Psoas muscle (tissue), 8 donors: ENCODE measurements at regions of chr15 and their contacts with region 1.

Region 1: DNA sequence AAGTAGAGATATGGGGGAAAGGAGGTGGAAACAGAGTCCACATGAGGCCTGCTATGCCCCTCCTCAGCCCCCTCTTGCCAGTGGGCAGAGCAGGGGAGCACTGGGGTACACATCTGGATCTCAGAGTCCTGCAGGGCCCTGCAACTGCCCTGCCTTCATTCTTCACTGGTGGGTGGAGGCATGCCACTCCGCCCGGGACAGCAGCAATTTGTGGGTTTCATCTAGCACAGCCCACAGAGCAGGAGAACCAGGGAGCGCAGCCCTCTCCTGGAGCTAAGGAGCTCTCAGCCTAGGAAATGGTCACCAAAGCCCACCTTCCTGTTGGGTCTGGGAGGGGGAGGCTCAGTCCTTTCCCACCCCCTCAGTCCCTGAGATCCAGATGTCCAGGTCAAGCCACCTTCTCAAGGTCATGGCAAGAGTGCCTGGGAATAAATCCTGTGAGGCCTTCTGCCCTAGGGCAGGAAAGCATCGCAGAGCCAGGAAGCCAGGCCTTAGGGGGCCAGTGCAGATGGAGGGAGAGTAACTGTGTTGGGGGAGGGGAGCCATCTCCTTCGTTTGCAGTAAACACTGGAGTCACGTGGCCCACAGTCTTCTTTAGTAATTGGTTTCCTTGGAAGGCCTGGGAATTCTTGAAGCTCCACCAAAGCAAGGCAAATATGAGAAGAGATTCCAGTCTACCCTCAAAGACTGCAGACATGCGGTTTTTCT is 31.0 kb downstream of the ANP32A start:
- DNase-seq: no peak
- ATAC-seq: no peak
- H3K4me3 ChIP-seq: no peak overlapping the region
- H3K27ac ChIP-seq: peak overlapping the region; percentile 33
- H3K4me1 ChIP-seq: peaks cover 57% of the 10 kb centered on the region
- H3K27me3 ChIP-seq: no peaks in the 10 kb centered on the region
- CTCF ChIP-seq: no peak

Region 2: GRCh38 chr15:68277603-68278344 is 511.9 kb before region 1 on chr15 and contains the start of gene FEM1B:
- intact Hi-C with region 1: no loop called
- DNase-seq: peak; percentile 93 to 96
- ATAC-seq: peak; percentile 77 to 91 (median 88)
- H3K4me3 ChIP-seq: peak within 1 kb of the TSS; percentile 85
- H3K27ac ChIP-seq: peak within 1 kb of the TSS; percentile 97
- H3K4me1 ChIP-seq: peaks cover 61% of the 10 kb centered on the region
- H3K27me3 ChIP-seq: no peaks in the 10 kb centered on the region
- CTCF ChIP-seq: peak; percentile 27
- total RNA-seq, gene FEM1B: 69.3 to 188 (median 111) TPM

Region 3: DNA sequence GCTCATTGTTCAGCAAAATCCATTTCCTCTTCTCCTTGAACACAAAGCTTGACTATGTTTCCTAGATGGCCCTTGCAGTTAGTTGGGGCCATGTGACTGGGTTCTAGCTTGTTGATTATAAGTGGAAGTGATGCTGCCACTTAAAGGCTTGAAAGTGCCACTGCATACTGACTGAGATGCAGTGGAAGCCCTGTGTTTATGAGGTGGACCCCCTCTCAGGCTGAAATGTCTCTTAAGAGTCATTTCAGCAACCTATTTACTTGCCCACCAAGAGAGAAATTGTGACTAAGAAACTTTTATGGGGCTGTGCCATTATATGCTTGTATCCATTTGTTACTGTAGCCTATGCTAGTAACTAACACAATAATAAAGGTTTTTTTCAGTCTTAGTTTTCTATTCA is 39.4 kb after region 1 on chr15:
- intact Hi-C with region 1: loop called in 1 of 2 experiments (anchors 5 kb)
- DNase-seq: no peak
- ATAC-seq: peak in 2 of 4 donors; percentile 75 to 76
- H3K4me3 ChIP-seq: no peak overlapping the region
- H3K27ac ChIP-seq: no peak overlapping the region
- H3K4me1 ChIP-seq: no peaks in the 10 kb centered on the region
- H3K27me3 ChIP-seq: no peaks in the 10 kb centered on the region
- CTCF ChIP-seq: peak; percentile 51

Region 4: GRCh38 chr15:70014860-70015490 is 1225.3 kb after region 1 on chr15:
- intact Hi-C with region 1: no loop called
- DNase-seq: no peak
- ATAC-seq: no peak
- H3K4me3 ChIP-seq: no peak overlapping the region
- H3K27ac ChIP-seq: no peak overlapping the region
- H3K4me1 ChIP-seq: no peaks in the 10 kb centered on the region
- H3K27me3 ChIP-seq: no peaks in the 10 kb centered on the region
- CTCF ChIP-seq: no peak